A673 (cell line): ENCODE measurements at regions of chr2 and their contacts with region 1.

Region 1: DNA sequence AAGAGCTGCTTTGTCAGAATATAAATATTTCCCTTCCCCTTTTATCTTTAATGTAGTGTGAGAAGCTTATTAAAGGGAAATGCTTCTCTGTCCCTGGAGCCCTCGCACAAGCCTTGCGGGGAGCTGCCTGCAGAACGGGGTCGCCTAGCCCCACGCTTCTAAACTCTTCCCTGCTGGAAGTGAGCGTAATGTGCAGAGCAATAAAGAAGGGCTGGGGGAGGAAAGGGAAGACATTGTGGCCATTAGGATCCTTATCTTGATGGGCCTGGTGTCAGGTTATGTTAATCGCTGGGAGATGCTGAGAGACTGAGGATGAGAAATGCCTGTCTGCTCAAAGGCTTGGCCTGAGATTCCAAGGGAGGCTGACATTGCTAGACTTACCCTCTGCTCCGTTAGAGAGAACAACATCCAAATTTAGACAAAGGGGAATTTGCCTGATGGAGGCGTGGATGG is 18.9 kb upstream of the FZD7 start:
- DNase-seq: peak; percentile 60
- H3K4me3 ChIP-seq: no peak overlapping the region
- H3K27ac ChIP-seq: no peak overlapping the region
- H3K4me1 ChIP-seq: peaks cover 11% of the 10 kb centered on the region
- H3K27me3 ChIP-seq: no peaks in the 10 kb centered on the region
- CTCF ChIP-seq: no peak

Region 2: GRCh38 chr2:201933792-201934237 is 81.0 kb before region 1 on chr2:
- CTCF ChIA-PET with region 1: no interaction called
- POLR2A ChIA-PET with region 1: no interaction called
- intact Hi-C with region 1: loop called (anchors 5 kb)
- DNase-seq: peak; percentile 55
- H3K4me3 ChIP-seq: no peak overlapping the region
- H3K27ac ChIP-seq: no peak overlapping the region
- H3K4me1 ChIP-seq: peaks cover 36% of the 10 kb centered on the region
- H3K27me3 ChIP-seq: peaks cover 74% of the 10 kb centered on the region
- CTCF ChIP-seq: no peak

Region 3: DNA sequence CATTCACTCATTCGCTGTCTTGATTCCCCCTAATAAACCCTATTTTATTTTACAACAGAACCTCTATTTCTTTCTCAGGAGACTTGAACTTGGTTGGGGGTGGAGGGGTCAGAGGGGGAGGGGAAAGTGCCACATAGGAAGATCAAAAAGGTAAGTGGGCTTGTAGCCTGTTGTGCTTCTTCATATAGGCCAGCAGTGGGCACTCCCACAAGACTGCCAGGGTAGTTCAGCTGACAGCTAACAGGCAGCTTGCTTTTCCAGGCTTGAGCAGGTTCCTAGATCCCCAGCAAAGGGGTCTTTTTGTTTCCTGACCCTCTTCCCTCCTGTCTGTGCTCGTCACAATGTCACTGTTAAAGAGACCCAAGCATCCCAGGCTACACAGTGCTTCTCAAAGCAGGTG is 57.4 kb after region 1 on chr2:
- CTCF ChIA-PET with region 1: no interaction called
- POLR2A ChIA-PET with region 1: no interaction called
- intact Hi-C with region 1: no loop called
- DNase-seq: peak; percentile 22
- H3K4me3 ChIP-seq: no peak overlapping the region
- H3K27ac ChIP-seq: no peak overlapping the region
- H3K4me1 ChIP-seq: no peaks in the 10 kb centered on the region
- H3K27me3 ChIP-seq: no peaks in the 10 kb centered on the region
- CTCF ChIP-seq: peak; percentile 57